Dorsolateral prefrontal cortex (tissue), 120 donors: ENCODE measurements at regions of chr6 and their contacts with region 1.

Region 1: DNA sequence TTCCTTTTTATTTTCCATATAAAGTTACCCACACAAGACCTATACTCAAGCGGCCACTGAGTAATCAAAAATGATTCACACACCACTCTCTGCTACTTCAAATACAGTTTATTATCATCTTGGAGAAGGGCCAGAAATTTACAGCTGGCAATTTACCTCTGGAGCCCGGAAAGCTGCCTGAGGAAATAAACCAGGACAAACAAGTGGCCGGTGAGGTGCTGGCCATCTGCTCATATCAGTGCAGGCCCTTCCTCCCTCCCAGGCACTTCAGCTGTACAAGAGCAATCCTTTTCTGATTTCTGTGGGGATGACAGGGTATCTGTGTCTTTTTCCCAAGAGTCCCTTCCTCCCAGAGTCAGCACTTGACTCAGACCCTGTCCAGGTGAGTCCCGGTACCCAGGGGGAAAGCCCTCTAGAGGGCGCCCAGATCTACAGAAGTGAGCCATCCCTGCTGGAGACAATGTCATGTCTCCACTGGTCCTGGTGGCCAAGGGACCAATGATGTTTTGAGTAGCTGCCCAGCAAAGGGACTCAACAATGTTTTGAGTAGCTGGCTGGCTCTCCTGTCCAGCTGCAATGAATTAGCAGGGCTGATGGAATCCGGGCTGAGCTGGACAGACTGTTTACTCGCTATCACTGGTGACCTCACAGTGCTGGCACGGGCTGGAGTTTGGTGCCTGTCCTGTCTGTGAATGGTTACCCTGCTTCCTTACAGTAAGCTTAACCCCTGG is 23.6 kb downstream of the LRP11 start:
- DNase-seq: peak in 8 of 10 donors; percentile 40 to 79 (median 61)
- H3K4me3 ChIP-seq: no peak overlapping the region
- H3K27ac ChIP-seq: peak overlapping the region in 47 of 59 donors; percentile 2 to 85 (median 51)
- H3K27me3 ChIP-seq: no peaks in the 10 kb centered on the region
- CTCF ChIP-seq: peak in 53 of 56 donors; percentile 20 to 76 (median 56)

Region 2: GRCh38 chr6:149779644-149779963 is 60.9 kb before region 1 on chr6:
- intact Hi-C with region 1: no loop called
- DNase-seq: no peak
- H3K4me3 ChIP-seq: no peak overlapping the region
- H3K27ac ChIP-seq: no peak overlapping the region
- H3K27me3 ChIP-seq: no peaks in the 10 kb centered on the region
- CTCF ChIP-seq: no peak

Region 3: GRCh38 chr6:150004783-150005717 is 164.5 kb after region 1 on chr6:
- intact Hi-C with region 1: loop called in 1 of 2 experiments (anchors 5 kb)
- DNase-seq: peak; percentile 69 to 89 (median 80)
- H3K4me3 ChIP-seq: peak overlapping the region; percentile 36 to 78 (median 63)
- H3K27ac ChIP-seq: peak overlapping the region in 2 of 59 donors; percentile 48 to 61
- H3K27me3 ChIP-seq: peaks cover 0 to 67% (median 31%) of the 10 kb centered on the region in 45 donors
- CTCF ChIP-seq: peak in 13 of 56 donors; percentile 11 to 43 (median 17)